MCF 10A (cell line): ENCODE measurements at regions of chr6 and their contacts with region 1.

Region 1: DNA sequence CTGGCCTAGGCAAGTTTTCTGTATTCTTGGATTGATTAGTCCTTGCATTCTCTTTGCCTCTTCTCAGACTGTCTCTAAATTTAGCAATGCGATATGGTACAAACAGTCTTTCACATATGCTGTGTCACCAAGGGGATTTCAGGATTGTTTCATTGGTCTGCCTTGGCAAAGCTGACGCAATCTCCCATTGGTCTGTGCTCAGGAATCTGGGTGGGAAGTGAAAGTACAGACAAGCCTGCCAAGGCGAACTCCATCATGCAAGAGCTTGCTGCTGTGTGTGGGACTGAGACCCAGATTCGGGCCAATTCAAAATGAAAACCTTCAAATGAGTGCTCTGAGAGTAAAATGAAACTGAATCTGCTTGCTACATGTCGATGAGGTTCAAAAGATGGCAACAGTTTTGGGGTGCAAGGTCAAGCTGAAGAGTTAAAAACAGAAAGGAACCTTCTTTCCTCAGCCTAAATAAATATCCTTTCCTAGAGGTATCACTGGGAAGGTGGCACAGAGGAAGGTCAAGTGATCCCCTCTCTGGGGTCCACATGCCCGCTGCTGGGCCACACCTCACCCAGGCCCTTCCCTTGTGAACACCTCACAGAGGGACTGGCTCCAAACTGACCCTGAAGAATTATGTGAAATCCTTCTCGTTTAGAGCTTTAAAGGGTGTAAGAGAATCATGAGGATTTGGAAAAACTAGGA is 198.8 kb upstream of the PREP start:
- DNase-seq: peak; percentile 99
- H3K4me3 Mint-ChIP-seq: peak overlapping the region; percentile 56
- H3K27ac Mint-ChIP-seq: peak overlapping the region; percentile 98
- H3K4me1 Mint-ChIP-seq: peaks cover 38% of the 10 kb centered on the region
- H3K27me3 Mint-ChIP-seq: no peaks in the 10 kb centered on the region
- CTCF ChIP-seq: no peak

Region 2: GRCh38 chr6:104365451-104366234 is 1236.0 kb before region 1 on chr6:
- CTCF ChIA-PET with region 1: no interaction called
- POLR2A ChIA-PET with region 1: no interaction called
- intact Hi-C with region 1: no loop called
- DNase-seq: no peak
- H3K4me3 Mint-ChIP-seq: no peak overlapping the region
- H3K27ac Mint-ChIP-seq: no peak overlapping the region
- H3K4me1 Mint-ChIP-seq: peaks cover 5% of the 10 kb centered on the region
- H3K27me3 Mint-ChIP-seq: peaks cover 16% of the 10 kb centered on the region
- CTCF ChIP-seq: no peak

Region 3: DNA sequence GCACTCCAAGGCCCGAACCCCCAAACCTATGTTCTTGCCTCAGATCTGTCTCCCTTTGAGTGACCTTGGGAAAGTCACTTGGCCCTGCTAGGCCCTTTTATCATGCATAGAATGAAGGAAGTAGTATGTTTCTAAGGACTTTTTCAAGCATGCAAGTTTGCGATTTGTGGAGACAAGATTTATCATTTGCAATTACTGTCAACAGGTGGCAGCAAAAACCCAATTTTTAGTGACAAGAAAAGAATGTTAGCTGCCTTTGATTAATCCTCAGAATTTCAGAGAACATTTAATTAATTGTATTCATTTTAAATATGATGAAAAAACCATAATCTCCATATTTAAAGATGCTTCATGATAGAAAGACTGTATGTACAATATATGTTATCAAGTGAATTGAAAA is 170.5 kb before region 1 on chr6:
- CTCF ChIA-PET with region 1: interaction called, 3 read pairs
- POLR2A ChIA-PET with region 1: interaction called, 3 read pairs
- intact Hi-C with region 1: loop called (anchors 2 kb)
- DNase-seq: peak; percentile 70
- H3K4me3 Mint-ChIP-seq: no peak overlapping the region
- H3K27ac Mint-ChIP-seq: no peak overlapping the region
- H3K4me1 Mint-ChIP-seq: peaks cover 26% of the 10 kb centered on the region
- H3K27me3 Mint-ChIP-seq: no peaks in the 10 kb centered on the region
- CTCF ChIP-seq: peak; percentile 57

Region 4: DNA sequence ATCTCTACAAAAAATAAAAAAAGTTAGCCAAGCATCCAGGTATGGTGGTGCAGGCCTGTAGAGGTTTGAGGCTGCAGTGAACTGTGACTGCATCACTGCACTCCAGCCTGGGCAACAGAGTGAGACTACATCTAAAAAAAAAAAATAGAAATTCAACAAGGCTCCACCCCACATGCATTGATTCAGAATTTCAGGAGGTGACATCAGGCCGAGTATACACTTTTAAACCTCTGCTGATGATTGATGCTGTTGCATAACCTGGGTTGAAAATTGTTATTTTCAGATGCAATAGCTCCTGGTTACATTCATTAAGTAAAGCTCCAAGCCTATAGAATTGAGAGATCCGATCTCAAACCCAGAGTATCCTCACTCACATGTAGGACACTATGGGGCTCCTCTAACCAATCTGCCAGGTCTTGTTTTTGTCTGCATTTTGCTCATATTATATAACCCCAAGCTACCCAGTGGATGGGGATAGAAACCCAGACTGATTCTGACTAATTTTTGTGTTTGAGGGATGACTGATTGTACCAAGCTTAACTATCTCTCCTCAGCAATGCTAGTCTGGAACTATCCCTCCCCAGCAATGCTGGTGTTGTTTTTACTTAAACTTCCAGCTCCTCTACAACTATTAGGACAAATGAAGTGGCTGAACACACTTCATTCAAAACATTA is 75.4 kb before region 1 on chr6:
- CTCF ChIA-PET with region 1: no interaction called
- POLR2A ChIA-PET with region 1: interaction called, 7 read pairs
- intact Hi-C with region 1: loop called (anchors 2 kb)
- DNase-seq: no peak
- H3K4me3 Mint-ChIP-seq: no peak overlapping the region
- H3K27ac Mint-ChIP-seq: no peak overlapping the region
- H3K4me1 Mint-ChIP-seq: peaks cover 5% of the 10 kb centered on the region
- H3K27me3 Mint-ChIP-seq: no peaks in the 10 kb centered on the region
- CTCF ChIP-seq: no peak

Region 5: DNA sequence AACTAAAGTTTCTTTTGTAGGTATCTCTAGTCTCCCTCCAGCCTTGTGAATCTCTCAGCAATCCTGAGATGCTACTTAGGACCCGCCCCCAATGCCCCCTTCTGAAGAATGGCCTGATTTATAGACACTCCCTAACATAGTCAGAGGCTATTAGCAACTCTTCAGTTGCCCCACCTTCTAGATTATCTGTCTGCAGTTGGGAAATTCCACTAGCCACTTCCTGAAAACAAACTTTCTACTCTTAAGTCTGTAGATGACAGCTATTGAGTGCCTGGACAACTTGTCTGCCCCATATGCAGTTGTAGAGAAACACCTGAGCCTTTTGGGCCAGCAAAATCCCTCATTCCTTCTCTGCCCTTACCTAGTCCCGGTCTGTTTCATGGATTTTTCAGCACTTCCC is 10.6 kb before region 1 on chr6:
- CTCF ChIA-PET with region 1: interaction called, 4 read pairs
- POLR2A ChIA-PET with region 1: interaction called, 14 read pairs
- intact Hi-C with region 1: no loop called
- DNase-seq: peak; percentile 79
- H3K4me3 Mint-ChIP-seq: no peak overlapping the region
- H3K27ac Mint-ChIP-seq: peak overlapping the region; percentile 82
- H3K4me1 Mint-ChIP-seq: peaks cover 62% of the 10 kb centered on the region
- H3K27me3 Mint-ChIP-seq: no peaks in the 10 kb centered on the region
- CTCF ChIP-seq: no peak

Region 6: DNA sequence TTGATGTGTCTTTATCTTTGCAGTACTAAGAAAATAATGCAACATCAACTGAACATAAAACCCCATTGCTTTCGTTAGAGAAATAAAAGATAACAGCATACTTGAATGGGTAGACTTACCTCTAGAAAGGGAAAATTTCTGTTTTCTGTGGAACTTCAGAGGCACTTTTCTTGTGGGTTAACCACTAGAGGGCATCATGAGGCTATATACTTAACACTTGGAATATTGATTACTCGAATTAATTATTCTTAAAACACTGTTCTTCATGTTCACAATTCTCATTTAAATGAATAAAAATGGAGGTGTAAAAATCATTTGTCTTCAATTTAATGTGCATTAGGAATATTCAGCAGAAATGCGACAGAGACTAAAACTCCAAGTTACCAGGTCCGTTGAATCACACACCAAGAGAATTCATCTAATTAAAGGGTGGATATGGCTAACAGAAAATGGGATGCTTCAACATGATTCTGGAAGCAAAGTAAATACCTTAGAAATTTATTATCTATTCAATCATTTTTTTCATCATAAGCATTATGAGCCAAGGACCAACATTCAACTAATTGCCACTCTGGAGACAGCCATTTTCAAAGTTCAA is 132.0 kb after region 1 on chr6:
- CTCF ChIA-PET with region 1: interaction called, 4 read pairs
- POLR2A ChIA-PET with region 1: interaction called, 4 read pairs
- intact Hi-C with region 1: loop called (anchors 5 kb)
- DNase-seq: peak; percentile 51
- H3K4me3 Mint-ChIP-seq: no peak overlapping the region
- H3K27ac Mint-ChIP-seq: no peak overlapping the region
- H3K4me1 Mint-ChIP-seq: peaks cover 8% of the 10 kb centered on the region
- H3K27me3 Mint-ChIP-seq: no peaks in the 10 kb centered on the region
- CTCF ChIP-seq: peak; percentile 35

Region 7: DNA sequence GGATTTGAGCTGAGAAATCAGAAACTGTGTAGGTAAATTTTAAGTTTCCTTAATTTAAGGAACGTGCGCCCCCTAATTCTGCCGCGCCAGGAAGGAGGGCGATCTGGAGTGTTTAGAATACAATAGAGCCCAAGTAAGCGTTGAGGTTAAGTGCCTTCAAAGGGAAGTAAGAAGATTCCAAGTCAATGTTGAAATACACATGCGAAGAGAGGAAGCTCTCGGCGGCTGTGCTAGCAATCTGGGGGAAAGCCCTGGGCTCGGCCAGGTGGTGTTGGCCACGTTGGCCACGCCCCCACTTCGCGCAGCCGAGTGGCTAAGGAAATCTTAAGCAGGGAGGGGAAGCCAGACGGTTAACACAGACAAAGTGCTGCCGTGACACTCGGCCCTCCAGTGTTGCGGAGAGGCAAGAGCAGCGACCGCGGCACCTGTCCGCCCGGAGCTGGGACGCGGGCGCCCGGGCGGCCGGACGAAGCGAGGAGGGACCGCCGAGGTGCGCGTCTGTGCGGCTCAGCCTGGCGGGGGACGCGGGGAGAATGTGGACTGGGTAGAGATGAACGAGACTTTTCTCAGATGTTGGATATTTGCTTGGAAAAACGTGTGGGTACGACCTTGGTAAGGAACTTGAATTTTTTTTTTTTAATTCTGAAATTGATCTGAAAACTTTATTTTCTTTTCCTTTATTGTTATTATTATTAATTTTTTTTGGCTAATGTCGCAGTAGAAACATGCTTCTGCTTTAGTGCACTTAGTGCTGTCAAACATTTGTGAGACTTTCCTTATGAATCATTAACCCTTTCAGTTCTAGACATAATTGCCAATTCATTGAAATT is 484.5 kb after region 1 on chr6 and contains the start of gene PRDM1:
- CTCF ChIA-PET with region 1: interaction called, 5 read pairs
- POLR2A ChIA-PET with region 1: interaction called, 23 read pairs
- intact Hi-C with region 1: loop called (anchors 1 kb)
- DNase-seq: peak; percentile 93
- H3K4me3 Mint-ChIP-seq: peak within 1 kb of the TSS; percentile 97
- H3K27ac Mint-ChIP-seq: peak within 1 kb of the TSS; percentile 89
- H3K4me1 Mint-ChIP-seq: peaks cover 58% of the 10 kb centered on the region
- H3K27me3 Mint-ChIP-seq: no peaks in the 10 kb centered on the region
- CTCF ChIP-seq: no peak
- total RNA-seq, gene PRDM1: 12.6 and 13.1 TPM in 2 replicates

Region 8: DNA sequence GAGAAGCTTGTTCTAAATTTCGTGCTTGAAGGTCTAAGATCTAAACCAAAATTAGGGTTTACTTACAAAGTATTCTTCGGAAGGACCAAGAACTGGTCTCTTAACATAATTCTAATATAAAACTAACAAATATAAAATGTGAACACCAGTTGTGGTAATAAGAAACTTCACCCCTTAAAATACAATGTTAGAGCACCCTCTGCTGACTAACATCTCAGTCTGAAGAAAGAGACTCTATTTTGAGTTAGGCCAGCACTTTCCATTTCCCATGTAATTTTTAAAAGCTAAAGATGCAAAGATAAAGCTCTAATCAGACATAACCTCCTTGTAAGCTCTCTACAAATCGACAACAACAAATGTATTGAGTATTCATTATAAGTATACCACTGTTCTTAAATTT is 699.3 kb after region 1 on chr6:
- CTCF ChIA-PET with region 1: interaction called, 4 read pairs
- POLR2A ChIA-PET with region 1: interaction called, 3 read pairs
- intact Hi-C with region 1: loop called (anchors 5 kb)
- DNase-seq: peak; percentile 62
- H3K4me3 Mint-ChIP-seq: no peak overlapping the region
- H3K27ac Mint-ChIP-seq: no peak overlapping the region
- H3K4me1 Mint-ChIP-seq: no peaks in the 10 kb centered on the region
- H3K27me3 Mint-ChIP-seq: no peaks in the 10 kb centered on the region
- CTCF ChIP-seq: peak; percentile 50